Sigmoid colon (tissue), 7 donors: ENCODE measurements at regions of chr10 and their contacts with region 1.

Region 1: DNA sequence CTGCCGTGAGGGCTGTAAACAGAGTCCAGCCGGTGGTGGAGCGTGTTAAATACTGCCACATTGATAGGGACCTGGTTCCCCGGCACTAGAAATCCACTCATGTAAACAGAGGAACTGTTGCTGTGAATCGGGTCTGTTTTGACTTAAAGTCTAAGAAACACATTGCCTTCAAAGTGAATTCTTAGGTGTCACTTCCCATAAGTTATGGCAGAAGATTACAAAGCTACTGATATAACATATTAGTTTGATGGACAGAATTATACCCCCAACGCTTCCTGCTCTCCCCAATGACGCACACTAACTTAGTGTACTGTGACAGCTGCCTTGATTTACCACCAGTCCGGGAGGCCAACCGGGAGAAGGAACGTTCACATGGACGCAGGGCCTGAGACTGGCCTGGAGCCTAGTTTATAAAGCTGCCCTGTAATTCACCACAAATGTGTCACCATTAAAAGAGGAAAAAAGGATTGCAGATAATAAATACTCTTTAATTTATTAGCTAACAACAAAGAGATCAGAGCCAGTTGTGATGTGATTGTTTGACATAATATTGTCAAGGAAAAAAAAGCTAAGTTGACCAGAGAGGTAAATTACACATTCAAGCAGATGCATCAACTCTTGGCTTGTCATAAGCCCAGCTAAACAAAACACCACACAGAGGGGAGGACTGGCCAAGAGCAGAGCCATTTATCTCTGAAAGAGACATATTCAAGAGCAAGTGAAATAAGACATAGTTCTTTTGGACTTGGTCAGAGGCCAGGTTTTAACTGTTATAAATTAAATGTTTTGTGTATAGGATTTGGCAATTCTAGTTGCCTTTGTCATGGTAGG is 820.6 kb downstream of the LRMDA start:
- DNase-seq: peak; percentile 99
- H3K4me3 ChIP-seq: no peak overlapping the region
- H3K27ac ChIP-seq: peak overlapping the region; percentile 72 to 77 (median 76)
- H3K4me1 ChIP-seq: peaks cover 0 to 31% (median 17%) of the 10 kb centered on the region in 4 donors
- H3K27me3 ChIP-seq: no peaks in the 10 kb centered on the region
- CTCF ChIP-seq: no peak
- EP300 ChIP-seq: peak; percentile 85 to 97 (median 90)
- POLR2A ChIP-seq: no peak

Region 2: DNA sequence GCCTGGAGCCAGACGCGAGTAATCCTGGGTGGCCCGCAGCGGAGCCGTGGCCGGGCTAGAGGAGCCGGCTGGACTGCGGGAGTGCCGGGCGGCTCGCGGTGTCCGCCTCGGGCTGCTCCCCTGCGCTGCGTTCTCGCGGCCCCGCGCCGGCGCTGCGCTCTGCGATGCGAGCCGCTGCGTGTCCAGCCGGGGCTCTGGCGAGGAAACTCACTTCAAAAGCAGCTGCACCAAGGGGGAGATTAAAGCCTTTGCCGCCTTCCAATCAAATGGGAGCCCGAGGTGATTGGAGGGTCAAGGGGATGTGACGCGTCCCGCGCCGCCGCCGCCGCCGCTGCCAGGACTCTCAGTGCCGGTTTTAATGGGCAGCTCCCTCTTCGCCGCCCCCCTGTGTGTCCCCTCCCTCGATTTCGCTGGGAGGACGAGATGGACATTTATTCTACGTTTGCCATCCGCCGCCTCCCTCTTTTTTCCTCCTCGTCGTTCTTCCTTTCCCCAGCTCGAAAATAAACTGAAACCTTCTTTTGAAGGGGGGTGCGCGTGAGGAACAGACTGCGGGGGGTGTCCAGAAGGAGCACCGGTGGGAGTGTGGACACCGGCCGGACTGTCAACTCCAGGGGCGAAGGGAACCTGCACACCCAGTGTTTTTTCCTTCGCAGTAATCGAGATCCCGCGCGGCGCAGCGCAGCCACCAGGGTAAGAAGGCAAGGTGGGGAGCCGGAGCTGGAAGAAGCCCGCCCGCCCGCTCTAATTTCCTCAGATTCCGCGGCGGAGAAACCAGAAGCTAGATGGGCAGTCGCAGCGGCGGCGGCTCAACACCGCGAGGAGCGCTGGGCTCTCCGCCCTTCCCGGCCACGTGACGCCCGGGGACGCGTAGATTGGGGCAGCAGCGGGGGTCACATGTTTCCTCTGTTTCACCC is 850.2 kb before region 1 on chr10 and contains the start of gene ZNF503:
- intact Hi-C with region 1: loop called (anchors 2 kb)
- DNase-seq: peak; percentile 99
- H3K4me3 ChIP-seq: peak within 1 kb of the TSS; percentile 76 to 97 (median 92)
- H3K27ac ChIP-seq: peak within 1 kb of the TSS; percentile 93 to 99 (median 98)
- H3K4me1 ChIP-seq: peaks cover 0 to 38% (median 29%) of the 10 kb centered on the region in 4 donors
- H3K27me3 ChIP-seq: no peaks in the 10 kb centered on the region
- CTCF ChIP-seq: peak; percentile 15 to 66 (median 46)
- EP300 ChIP-seq: peak in 2 of 4 donors; percentile 60 to 69
- POLR2A ChIP-seq: peak; percentile 65 to 80
- total RNA-seq, gene ZNF503: 10.0 to 20.3 (median 18.2) TPM

Region 3: GRCh38 chr10:76282061-76283035 is 30.3 kb after region 1 on chr10:
- intact Hi-C with region 1: loop called (anchors 1 kb)
- DNase-seq: peak; percentile 84
- H3K4me3 ChIP-seq: no peak overlapping the region
- H3K27ac ChIP-seq: peak overlapping the region in 3 of 4 donors; percentile 44 to 59 (median 59)
- H3K4me1 ChIP-seq: peaks cover 0 to 55% (median 42%) of the 10 kb centered on the region in 4 donors
- H3K27me3 ChIP-seq: no peaks in the 10 kb centered on the region
- CTCF ChIP-seq: no peak
- EP300 ChIP-seq: peak in 2 of 4 donors; percentile 12 to 30
- POLR2A ChIP-seq: no peak

Region 4: GRCh38 chr10:76397181-76397881 is 145.3 kb after region 1 on chr10:
- intact Hi-C with region 1: loop called (anchors 1 kb)
- DNase-seq: peak; percentile 94
- H3K4me3 ChIP-seq: peak overlapping the region in 1 of 4 donors; percentile 2
- H3K27ac ChIP-seq: peak overlapping the region; percentile 75 to 83 (median 76)
- H3K4me1 ChIP-seq: peaks cover 0 to 61% (median 32%) of the 10 kb centered on the region in 4 donors
- H3K27me3 ChIP-seq: no peaks in the 10 kb centered on the region
- CTCF ChIP-seq: no peak
- EP300 ChIP-seq: peak in 3 of 4 donors; percentile 10 to 46 (median 39)
- POLR2A ChIP-seq: no peak

Region 5: DNA sequence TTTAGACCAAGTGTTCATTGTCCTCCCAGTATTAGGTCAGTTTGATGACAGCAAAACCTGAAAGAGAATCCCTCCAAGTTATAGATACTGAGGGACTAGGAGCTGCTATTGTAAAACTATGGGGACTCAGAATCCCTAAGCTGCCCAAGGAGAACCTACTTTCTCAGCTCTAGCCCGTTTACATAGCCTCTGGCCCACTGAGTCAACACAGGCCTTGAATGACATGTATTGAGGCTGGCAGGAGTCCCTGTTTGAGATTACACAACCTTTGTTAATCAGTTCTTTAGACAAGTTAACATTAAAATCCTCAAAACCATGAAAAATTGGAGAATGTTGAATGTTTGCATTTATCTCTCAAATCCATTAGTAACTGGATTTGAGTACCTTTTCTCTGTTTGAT is 306.5 kb after region 1 on chr10:
- intact Hi-C with region 1: loop called (anchors 10 kb)
- DNase-seq: peak; percentile 80
- H3K4me3 ChIP-seq: no peak overlapping the region
- H3K27ac ChIP-seq: peak overlapping the region; percentile 41 to 77 (median 66)
- H3K4me1 ChIP-seq: peaks cover 0 to 57% (median 47%) of the 10 kb centered on the region in 4 donors
- H3K27me3 ChIP-seq: no peaks in the 10 kb centered on the region
- CTCF ChIP-seq: no peak
- EP300 ChIP-seq: no peak
- POLR2A ChIP-seq: no peak

Region 6: DNA sequence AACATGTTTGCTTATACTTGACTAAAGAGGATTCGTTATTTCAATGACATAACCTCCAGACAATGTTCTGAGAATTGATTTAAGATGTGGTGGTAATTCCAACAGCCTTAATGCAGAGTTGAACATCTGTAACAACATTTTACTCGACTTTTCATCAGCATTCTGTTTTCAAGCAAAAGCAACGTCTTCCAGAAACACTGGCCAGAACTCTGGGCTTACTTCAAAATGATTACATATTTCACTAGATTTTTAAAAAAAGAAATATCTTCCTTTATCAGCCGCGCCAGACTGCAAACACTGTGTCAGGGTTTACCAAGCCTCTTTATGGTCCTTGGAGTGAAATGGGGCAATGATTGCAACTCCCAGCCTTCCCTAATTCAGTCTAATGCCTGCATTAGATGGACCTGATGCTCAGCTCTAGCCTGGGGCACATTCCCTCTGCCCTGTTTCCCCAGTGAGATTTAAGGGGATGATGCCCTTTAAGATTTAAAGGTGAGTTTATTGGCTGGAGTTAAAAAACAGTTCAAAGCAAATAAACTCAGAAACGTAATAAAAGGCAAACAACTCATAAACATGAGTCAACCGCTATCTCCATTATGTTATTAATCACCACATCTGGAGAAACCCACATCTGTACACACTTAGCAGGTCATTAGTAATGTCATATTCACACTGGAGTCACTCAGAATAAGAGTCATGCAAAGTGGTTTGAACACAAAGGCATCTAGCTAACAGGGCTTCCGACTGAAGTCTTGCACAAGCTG is 721.6 kb after region 1 on chr10:
- intact Hi-C with region 1: loop called (anchors 1 kb)
- DNase-seq: peak; percentile 77
- H3K4me3 ChIP-seq: no peak overlapping the region
- H3K27ac ChIP-seq: peak overlapping the region in 3 of 4 donors; percentile 70 to 76 (median 72)
- H3K4me1 ChIP-seq: peaks cover 0 to 89% (median 78%) of the 10 kb centered on the region in 4 donors
- H3K27me3 ChIP-seq: no peaks in the 10 kb centered on the region
- CTCF ChIP-seq: no peak
- EP300 ChIP-seq: peak in 2 of 4 donors; percentile 8 to 14
- POLR2A ChIP-seq: no peak

Region 7: GRCh38 chr10:77072836-77073662 is 821.0 kb after region 1 on chr10:
- intact Hi-C with region 1: loop called (anchors 1 kb)
- DNase-seq: peak; percentile 96
- H3K4me3 ChIP-seq: no peak overlapping the region
- H3K27ac ChIP-seq: peak overlapping the region; percentile 20 to 82 (median 72)
- H3K4me1 ChIP-seq: peaks cover 0 to 54% (median 38%) of the 10 kb centered on the region in 4 donors
- H3K27me3 ChIP-seq: no peaks in the 10 kb centered on the region
- CTCF ChIP-seq: no peak
- EP300 ChIP-seq: peak; percentile 78 to 97 (median 90)
- POLR2A ChIP-seq: no peak